ENCODE measurements at regions of chr5 and their contacts with region 1.

Region 1: DNA sequence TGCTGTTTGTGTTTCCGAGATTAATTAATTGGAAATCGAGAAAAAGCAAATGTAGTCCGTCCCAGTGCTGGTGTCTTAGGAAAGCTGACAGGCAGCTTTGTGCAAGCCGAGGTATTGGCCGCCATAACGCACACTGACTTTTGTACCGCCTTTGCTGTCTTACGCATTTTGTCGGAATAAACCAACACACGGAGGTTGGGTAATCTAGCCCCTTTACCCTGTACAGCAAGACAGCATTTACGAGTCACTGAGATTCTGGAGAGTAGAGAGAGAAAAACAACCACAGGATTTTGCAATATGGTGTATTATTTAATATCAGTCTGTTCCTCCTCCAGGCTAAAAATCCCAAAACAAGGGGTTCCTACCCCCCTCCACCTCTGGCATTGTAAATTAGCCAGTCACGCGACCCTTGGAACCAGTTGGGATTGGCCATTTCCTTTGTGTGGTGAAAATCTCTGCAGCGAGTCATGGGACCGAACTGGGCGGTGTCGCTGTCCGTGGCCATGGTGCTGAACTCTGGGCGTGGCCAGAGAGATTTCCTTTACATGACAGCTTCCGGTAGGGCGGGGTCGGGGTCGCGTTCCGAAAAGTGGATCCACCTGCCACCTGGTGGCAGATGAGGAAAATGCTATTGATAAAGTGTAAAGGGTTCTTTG is 10.3 kb upstream of the PCDHB1 start:
- DNase-seq: peak; percentile 78
- H3K4me3 ChIP-seq: peak overlapping the region in 7 of 8 donors; percentile 2 to 64 (median 29)
- H3K27ac ChIP-seq: peak overlapping the region in 5 of 8 donors; percentile 41 to 76 (median 63)
- H3K4me1 ChIP-seq: peaks cover 0 to 15% (median 4%) of the 10 kb centered on the region in 6 donors
- H3K27me3 ChIP-seq: peaks cover 0 to 43% (median 0%) of the 10 kb centered on the region in 7 donors
- CTCF ChIP-seq: peak in 10 of 11 experiments; percentile 23 to 77 (median 62)
- POLR2A ChIP-seq: no peak

Region 2: GRCh38 chr5:140926443-140927227 is 114.3 kb before region 1 on chr5:
- intact Hi-C with region 1: loop called (anchors 2 kb)
- DNase-seq: peak; percentile 83
- H3K4me3 ChIP-seq: peak overlapping the region; percentile 25 to 70 (median 38)
- H3K27ac ChIP-seq: peak overlapping the region in 5 of 8 donors; percentile 2 to 57 (median 27)
- H3K4me1 ChIP-seq: peaks cover 4 to 19% (median 11%) of the 10 kb centered on the region in 6 donors
- H3K27me3 ChIP-seq: peaks cover 0 to 77% (median 27%) of the 10 kb centered on the region in 7 donors
- CTCF ChIP-seq: peak in 10 of 11 experiments; percentile 32 to 81 (median 65)
- POLR2A ChIP-seq: no peak

Region 3: GRCh38 chr5:141359790-141360426 is 319.0 kb after region 1 on chr5 and contains the start of gene PCDHGB2:
- intact Hi-C with region 1: no loop called
- DNase-seq: no peak
- H3K4me3 ChIP-seq: peak within 1 kb of the TSS in 5 of 8 donors; percentile 2 to 60 (median 24)
- H3K27ac ChIP-seq: no peak within 1 kb of the TSS
- H3K4me1 ChIP-seq: no peaks in the 10 kb centered on the region
- H3K27me3 ChIP-seq: peaks cover 0 to 94% (median 16%) of the 10 kb centered on the region in 7 donors
- CTCF ChIP-seq: peak in 5 of 11 experiments; percentile 22 to 38 (median 27)
- POLR2A ChIP-seq: no peak
- total RNA-seq, gene PCDHGB2: 1.7 to 4.5 (median 3.5) TPM